OCI-LY7 (cell line): ENCODE measurements at regions of chr13 and their contacts with region 1.

Region 1: GRCh38 chr13:51645154-51645650 is 60.9 kb downstream of the WDFY2 start:
- DNase-seq: peak; percentile 70
- H3K4me3 ChIP-seq: peak overlapping the region; percentile 22
- H3K27ac ChIP-seq: no peak overlapping the region
- H3K4me1 ChIP-seq: peaks cover 29% of the 10 kb centered on the region
- CTCF ChIP-seq: no peak

Region 2: GRCh38 chr13:51625555-51626345 is 19.5 kb before region 1 on chr13:
- CTCF ChIA-PET with region 1: no interaction called
- POLR2A ChIA-PET with region 1: interaction called, 10 read pairs
- intact Hi-C with region 1: no loop called
- DNase-seq: no peak
- H3K4me3 ChIP-seq: no peak overlapping the region
- H3K27ac ChIP-seq: no peak overlapping the region
- H3K4me1 ChIP-seq: no peaks in the 10 kb centered on the region
- CTCF ChIP-seq: no peak

Region 3: GRCh38 chr13:51704399-51705313 is 59.5 kb after region 1 on chr13:
- CTCF ChIA-PET with region 1: no interaction called
- POLR2A ChIA-PET with region 1: no interaction called
- intact Hi-C with region 1: no loop called
- DNase-seq: peak; percentile 53
- H3K4me3 ChIP-seq: peak overlapping the region; percentile 26
- H3K27ac ChIP-seq: peak overlapping the region; percentile 68
- H3K4me1 ChIP-seq: peaks cover 27% of the 10 kb centered on the region
- CTCF ChIP-seq: no peak